ENCODE measurements at regions of chr21 and their contacts with region 1.

Region 1: GRCh38 chr21:32569261-32570230 is 15.8 kb downstream of the TCP10L start:
- DNase-seq: peak; percentile 80
- H3K4me3 ChIP-seq: peak overlapping the region; percentile 65
- H3K27ac ChIP-seq: no peak overlapping the region
- H3K4me1 ChIP-seq: peaks cover 17% of the 10 kb centered on the region
- CTCF ChIP-seq: peak; percentile 89

Region 2: DNA sequence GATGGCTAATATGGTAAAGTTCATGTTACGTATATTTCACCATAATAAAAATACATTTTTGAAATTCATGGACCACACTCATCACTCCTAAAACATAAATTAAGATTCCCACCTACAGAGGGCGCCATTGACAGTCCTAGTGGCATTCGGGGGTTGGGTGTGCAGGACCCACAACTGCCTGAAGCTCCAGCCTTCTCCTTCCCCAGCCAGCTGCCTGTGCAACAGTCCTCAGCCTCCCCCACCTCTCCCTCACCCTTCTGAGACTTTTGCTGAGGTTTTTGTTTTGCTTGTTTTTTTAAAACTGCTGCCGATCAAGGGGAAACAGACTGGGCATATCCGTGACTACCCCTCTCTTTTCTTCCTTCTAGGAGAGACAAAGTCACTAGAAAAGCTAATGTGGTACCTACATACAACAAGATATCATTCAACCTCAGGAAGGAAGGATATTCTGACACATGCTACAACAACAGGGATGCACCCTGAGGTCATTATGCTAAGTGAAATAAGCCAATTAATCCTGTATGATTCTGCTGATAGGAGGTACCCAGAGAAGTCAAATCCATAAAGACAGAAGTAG is 166.3 kb before region 1 on chr21:
- CTCF ChIA-PET with region 1: no interaction called
- POLR2A ChIA-PET with region 1: no interaction called
- intact Hi-C with region 1: loop called (anchors 5 kb)
- DNase-seq: peak; percentile 70
- H3K4me3 ChIP-seq: no peak overlapping the region
- H3K27ac ChIP-seq: no peak overlapping the region
- H3K4me1 ChIP-seq: no peaks in the 10 kb centered on the region
- CTCF ChIP-seq: peak; percentile 85

Region 3: DNA sequence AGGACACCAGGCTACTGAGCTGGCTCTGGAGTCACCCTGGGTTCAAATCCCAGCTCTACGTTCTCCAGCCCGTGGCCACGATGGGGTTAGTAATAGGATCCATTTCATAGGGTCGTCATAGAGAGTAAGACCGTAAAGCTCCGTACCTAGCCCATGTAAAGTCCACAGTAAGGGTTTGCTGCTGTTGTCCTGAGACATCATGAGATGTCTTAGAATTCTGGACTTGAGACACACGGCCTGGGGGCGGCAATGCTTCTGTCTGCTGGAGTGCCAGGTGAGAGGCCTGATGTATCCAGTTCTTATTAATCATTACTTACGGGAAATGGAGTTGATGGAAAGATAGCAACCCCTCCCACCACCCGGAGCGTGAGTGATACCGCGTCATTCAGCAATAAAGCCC is 12.2 kb after region 1 on chr21:
- CTCF ChIA-PET with region 1: no interaction called
- POLR2A ChIA-PET with region 1: no interaction called
- intact Hi-C with region 1: no loop called
- DNase-seq: no peak
- H3K4me3 ChIP-seq: no peak overlapping the region
- H3K27ac ChIP-seq: no peak overlapping the region
- H3K4me1 ChIP-seq: no peaks in the 10 kb centered on the region
- CTCF ChIP-seq: no peak

Measured in OCI-LY7 (cell line).